Right ventricle myocardium superior (tissue), 1 donor: ENCODE measurements at regions of chr7 and their contacts with region 1.

Region 1: GRCh38 chr7:55255496-55256435 is 109.4 kb upstream of the LANCL2 start:
- DNase-seq: peak; percentile 87
- ATAC-seq: peak; percentile 98

Region 2: GRCh38 chr7:54773472-54774399 is 482.0 kb before region 1 on chr7:
- intact Hi-C with region 1: loop called (anchors 2 kb)
- DNase-seq: peak; percentile 85
- ATAC-seq: peak; percentile 99

Region 3: DNA sequence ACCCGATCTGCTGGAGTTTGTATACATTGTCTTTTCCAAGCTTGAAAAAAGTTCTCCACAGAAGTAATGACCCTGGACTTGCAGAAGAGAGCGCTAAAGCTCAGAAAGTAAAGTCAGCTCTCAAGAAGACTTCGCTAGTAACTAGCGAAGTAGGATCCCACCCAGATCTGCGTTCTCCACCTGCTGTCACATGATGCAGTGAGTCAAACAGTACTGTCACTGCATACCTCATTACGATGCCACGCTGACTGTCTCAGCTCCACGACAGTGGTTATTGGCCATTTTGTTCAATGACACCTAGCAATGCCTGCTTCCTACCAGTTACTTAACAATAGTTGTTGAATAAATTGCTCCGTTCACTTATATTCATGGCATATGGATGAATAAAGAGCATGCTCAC is 467.1 kb before region 1 on chr7:
- intact Hi-C with region 1: loop called (anchors 5 kb)
- DNase-seq: no peak
- ATAC-seq: peak; percentile 82

Region 4: DNA sequence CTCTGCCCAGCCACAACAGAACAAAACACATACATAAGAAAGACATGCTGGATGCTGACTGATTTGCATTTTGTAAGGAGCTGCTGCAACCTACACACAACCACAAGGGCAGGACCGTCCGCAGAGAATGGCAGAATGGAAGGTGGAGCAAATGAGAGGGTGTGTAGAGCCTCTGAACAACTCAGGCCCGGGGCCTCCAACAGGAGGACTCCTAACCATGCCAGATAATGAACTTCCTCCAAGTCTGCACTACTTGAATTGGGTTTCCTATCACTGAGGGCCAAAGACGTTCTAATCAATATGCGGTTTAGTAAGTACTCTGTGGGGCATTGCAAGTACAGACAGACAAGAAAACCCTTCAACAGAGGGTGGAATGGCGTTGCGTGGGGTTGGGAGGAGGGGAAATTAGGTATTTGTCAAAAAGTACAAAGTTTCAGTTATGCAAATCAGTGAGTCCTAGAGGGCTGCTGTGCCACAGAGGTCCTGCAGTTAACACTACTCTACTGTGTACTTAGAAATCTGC is 302.0 kb after region 1 on chr7:
- intact Hi-C with region 1: no loop called
- DNase-seq: no peak
- ATAC-seq: no peak